ENCODE measurements at regions of chr3 and their contacts with region 1.

Region 1: GRCh38 chr3:52428151-52429005 is 16.5 kb downstream of the SEMA3G start:
- DNase-seq: no peak
- ATAC-seq: peak; percentile 75
- H3K4me3 ChIP-seq: no peak overlapping the region
- H3K27ac ChIP-seq: no peak overlapping the region
- H3K4me1 ChIP-seq: no peaks in the 10 kb centered on the region
- H3K27me3 ChIP-seq: no peaks in the 10 kb centered on the region

Region 2: DNA sequence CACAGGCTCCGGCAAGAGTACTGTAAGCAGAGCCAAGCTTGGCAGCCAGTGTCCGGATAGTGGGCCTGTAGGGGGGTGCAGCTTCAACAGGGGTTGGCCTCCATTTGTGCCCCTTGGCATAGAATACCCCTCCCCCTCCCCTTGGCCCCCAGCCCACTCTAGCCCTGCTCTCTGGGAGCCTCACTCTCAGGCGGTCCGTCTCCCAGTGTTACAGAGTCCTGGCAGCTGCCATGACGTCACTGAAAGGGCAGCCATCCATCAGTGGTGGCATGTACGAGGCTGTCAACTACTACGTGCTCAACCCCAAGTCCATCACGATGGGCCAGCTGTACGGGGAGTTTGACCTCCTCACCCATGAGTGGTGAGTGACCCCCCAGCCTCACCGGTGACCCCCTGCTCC is 61.9 kb before region 1 on chr3:
- intact Hi-C with region 1: no loop called
- DNase-seq: no peak
- ATAC-seq: no peak
- H3K4me3 ChIP-seq: no peak overlapping the region
- H3K27ac ChIP-seq: no peak overlapping the region
- H3K4me1 ChIP-seq: no peaks in the 10 kb centered on the region
- H3K27me3 ChIP-seq: no peaks in the 10 kb centered on the region

Region 3: GRCh38 chr3:52444860-52445793 is 16.7 kb after region 1 on chr3 and contains the start of gene SEMA3G:
- intact Hi-C with region 1: loop called in 1 of 2 experiments (anchors 1 kb)
- DNase-seq: peak; percentile 87 to 91
- ATAC-seq: peak; percentile 67
- H3K4me3 ChIP-seq: no peak within 1 kb of the TSS
- H3K27ac ChIP-seq: no peak within 1 kb of the TSS
- H3K4me1 ChIP-seq: no peaks in the 10 kb centered on the region
- H3K27me3 ChIP-seq: no peaks in the 10 kb centered on the region
- total RNA-seq, gene SEMA3G: 12.5 to 23.8 TPM